BJ (cell line): ENCODE measurements at regions of chr2 and their contacts with region 1.

Region 1: GRCh38 chr2:224469374-224469964 is 67.6 kb upstream of the FAM124B start:
- DNase-seq: no peak
- H3K4me3 ChIP-seq: no peak overlapping the region
- H3K27me3 ChIP-seq: no peaks in the 10 kb centered on the region
- CTCF ChIP-seq: no peak

Region 2: DNA sequence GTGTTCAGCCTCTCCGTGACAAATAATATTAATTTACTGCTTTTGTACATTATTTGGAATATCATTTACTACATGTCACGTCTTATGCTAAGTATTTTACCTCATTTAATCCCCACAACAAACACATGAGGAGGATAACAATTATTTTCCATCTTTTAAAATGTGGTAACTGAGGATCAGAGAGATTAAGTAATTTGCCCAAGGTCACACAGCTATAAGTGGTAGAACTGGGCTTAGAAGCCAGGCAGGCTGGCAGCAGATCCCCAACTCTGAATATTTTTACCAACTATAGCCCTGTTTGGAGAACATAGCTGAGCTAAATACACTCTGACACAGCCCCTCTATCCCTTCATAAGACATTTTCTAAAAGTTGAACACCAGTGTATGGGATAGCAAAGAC is 656.1 kb before region 1 on chr2:
- CTCF ChIA-PET with region 1: no interaction called
- POLR2A ChIA-PET with region 1: interaction called, 11 read pairs
- DNase-seq: no peak
- H3K4me3 ChIP-seq: no peak overlapping the region
- H3K27me3 ChIP-seq: 0 out of 2 replicates have a peak, but pooled peaks cover 2% of the 10 kb centered on the region
- CTCF ChIP-seq: no peak

Region 3: GRCh38 chr2:223979730-223980396 is 489.6 kb before region 1 on chr2:
- CTCF ChIA-PET with region 1: no interaction called
- POLR2A ChIA-PET with region 1: no interaction called
- DNase-seq: no peak
- H3K4me3 ChIP-seq: no peak overlapping the region
- H3K27me3 ChIP-seq: no peaks in the 10 kb centered on the region
- CTCF ChIP-seq: no peak

Region 4: GRCh38 chr2:224357098-224357901 is 112.2 kb before region 1 on chr2:
- CTCF ChIA-PET with region 1: no interaction called
- POLR2A ChIA-PET with region 1: no interaction called
- DNase-seq: no peak
- H3K4me3 ChIP-seq: no peak overlapping the region
- H3K27me3 ChIP-seq: peaks cover 1% of the 10 kb centered on the region
- CTCF ChIP-seq: peak; percentile 66

Region 5: DNA sequence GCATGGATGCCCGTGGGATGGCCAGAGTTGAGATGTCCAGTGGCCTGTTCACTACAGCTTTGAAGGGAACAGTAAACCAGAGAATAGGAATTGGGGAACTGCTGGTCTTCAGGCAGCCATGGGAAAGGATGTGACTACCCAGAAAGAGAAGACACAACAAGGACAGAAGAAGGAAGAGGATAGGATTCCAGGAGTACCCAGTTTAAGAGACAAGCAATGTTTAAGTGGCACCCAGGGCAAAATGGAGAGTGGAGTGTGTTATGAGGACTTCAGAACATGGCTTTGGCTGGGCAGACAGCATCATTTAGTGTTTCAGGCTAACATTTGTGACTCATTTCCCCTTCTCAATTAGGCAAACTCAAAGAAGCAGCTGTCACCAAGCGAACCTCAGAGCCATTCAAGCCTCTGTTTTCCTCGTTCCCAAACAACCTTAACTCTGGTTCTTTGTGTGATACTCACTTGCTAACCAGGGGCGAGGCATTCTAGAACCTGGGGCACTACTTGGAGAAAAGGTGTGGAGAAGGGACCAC is 63.6 kb before region 1 on chr2:
- CTCF ChIA-PET with region 1: no interaction called
- POLR2A ChIA-PET with region 1: interaction called, 35 read pairs
- DNase-seq: no peak
- H3K4me3 ChIP-seq: no peak overlapping the region
- H3K27me3 ChIP-seq: no peaks in the 10 kb centered on the region; the same call in 1 of the 2 replicates
- CTCF ChIP-seq: no peak

Region 6: GRCh38 chr2:224479826-224480225 is 10.4 kb after region 1 on chr2:
- CTCF ChIA-PET with region 1: no interaction called
- POLR2A ChIA-PET with region 1: no interaction called
- DNase-seq: no peak
- H3K4me3 ChIP-seq: no peak overlapping the region
- H3K27me3 ChIP-seq: no peaks in the 10 kb centered on the region
- CTCF ChIP-seq: no peak